ENCODE measurements at regions of chr7 and their contacts with region 1.

Region 1: GRCh38 chr7:141014524-141015395 is at the start of gene MRPS33:
- DNase-seq: peak; percentile 96 to 97
- H3K4me3 ChIP-seq: peak within 1 kb of the TSS; percentile 62
- H3K4me3 Mint-ChIP-seq: peak within 1 kb of the TSS; percentile 91
- H3K27ac Mint-ChIP-seq: peak within 1 kb of the TSS; percentile 95
- H3K4me1 ChIP-seq: no peaks in the 10 kb centered on the region
- H3K4me1 Mint-ChIP-seq: peaks cover 11% of the 10 kb centered on the region
- H3K27me3 ChIP-seq: no peaks in the 10 kb centered on the region
- H3K27me3 Mint-ChIP-seq: peaks cover 2% of the 10 kb centered on the region
- CTCF ChIP-seq: peak in 1 of 2 experiments; percentile 80
- total RNA-seq, gene MRPS33: 67.7 and 70.2 TPM in 2 replicates

Region 2: DNA sequence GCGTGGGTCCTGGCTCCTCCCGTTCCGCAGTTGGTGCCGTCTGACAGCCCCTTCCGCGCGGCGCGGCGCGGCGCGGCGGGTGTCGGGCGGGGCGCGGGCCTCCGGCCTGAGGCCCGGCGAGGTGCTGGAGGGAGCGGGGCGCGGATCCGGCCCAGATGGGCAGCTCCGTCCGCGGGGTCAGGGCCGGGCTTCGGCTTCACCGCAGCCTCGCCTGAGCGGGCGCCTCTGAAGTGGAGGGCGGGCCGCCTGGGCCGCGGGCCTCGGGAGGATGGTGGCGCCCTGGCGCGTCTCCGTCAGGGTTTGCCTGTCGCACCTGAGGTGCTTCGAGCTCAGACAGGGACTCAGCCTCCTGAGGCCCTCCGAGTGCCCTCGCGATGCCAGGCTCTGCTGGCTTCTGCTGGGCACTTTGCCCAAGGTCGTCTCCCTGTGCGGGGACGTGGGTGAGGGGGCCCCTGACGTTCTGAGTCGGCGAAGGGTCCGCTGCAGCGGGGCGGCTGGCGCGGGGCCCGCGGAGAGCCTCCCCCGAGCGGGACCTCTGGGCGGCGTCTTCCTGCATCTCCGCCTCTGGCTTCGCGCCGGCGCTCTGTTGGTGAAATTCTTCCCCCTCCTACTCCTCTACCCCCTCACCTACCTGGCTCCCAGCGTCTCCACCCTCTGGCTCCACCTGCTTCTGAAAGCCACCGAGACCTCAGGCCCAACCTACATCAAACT is 341.5 kb before region 1 on chr7:
- CTCF ChIA-PET with region 1: no interaction called
- POLR2A ChIA-PET with region 1: no interaction called
- intact Hi-C with region 1: loop called (anchors 5 kb)
- DNase-seq: peak; percentile 68 to 72
- H3K4me3 ChIP-seq: peak overlapping the region; percentile 86
- H3K4me3 Mint-ChIP-seq: peak overlapping the region; percentile 81
- H3K27ac Mint-ChIP-seq: peak overlapping the region; percentile 31
- H3K4me1 ChIP-seq: 0 out of 2 replicates have a peak, but pooled peaks cover 3% of the 10 kb centered on the region
- H3K4me1 Mint-ChIP-seq: peaks cover 6% of the 10 kb centered on the region
- H3K27me3 ChIP-seq: no peaks in the 10 kb centered on the region
- H3K27me3 Mint-ChIP-seq: no peaks in the 10 kb centered on the region
- CTCF ChIP-seq: no peak

Region 3: GRCh38 chr7:140810830-140811556 is 203.8 kb before region 1 on chr7:
- CTCF ChIA-PET with region 1: interaction called, 43 read pairs
- POLR2A ChIA-PET with region 1: interaction called, 5 read pairs
- intact Hi-C with region 1: loop called (anchors 1 kb)
- DNase-seq: peak; percentile 73 to 81
- H3K4me3 ChIP-seq: no peak overlapping the region
- H3K4me3 Mint-ChIP-seq: no peak overlapping the region
- H3K27ac Mint-ChIP-seq: no peak overlapping the region
- H3K4me1 ChIP-seq: no peaks in the 10 kb centered on the region
- H3K4me1 Mint-ChIP-seq: peaks cover 6% of the 10 kb centered on the region
- H3K27me3 ChIP-seq: no peaks in the 10 kb centered on the region
- H3K27me3 Mint-ChIP-seq: no peaks in the 10 kb centered on the region
- CTCF ChIP-seq: peak; percentile 63 to 75

Region 4: DNA sequence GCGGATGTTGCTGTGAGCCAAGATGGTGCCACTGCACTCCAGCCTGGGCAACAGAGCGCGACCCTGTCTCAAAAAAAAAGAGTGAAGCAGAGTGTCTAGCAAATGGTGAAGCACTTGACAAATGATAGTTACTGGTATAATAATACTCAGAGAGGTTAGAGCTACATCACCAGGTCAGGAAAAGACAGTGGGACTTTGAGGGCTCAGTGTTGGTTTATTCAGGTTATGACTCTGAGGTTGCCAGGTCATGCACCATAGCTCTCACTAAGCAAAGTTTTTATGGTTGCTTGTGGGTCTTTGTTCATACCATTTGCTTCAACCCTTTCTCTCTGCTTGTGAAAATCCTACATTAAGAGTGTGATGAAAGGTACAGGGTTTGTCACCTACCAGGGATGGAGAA is 13.6 kb before region 1 on chr7:
- CTCF ChIA-PET with region 1: interaction called, 6 read pairs
- POLR2A ChIA-PET with region 1: interaction called, 8 read pairs
- intact Hi-C with region 1: loop called (anchors 1 kb)
- DNase-seq: peak in 1 of 2 experiments; percentile 8
- H3K4me3 ChIP-seq: no peak overlapping the region
- H3K4me3 Mint-ChIP-seq: peak overlapping the region; percentile 52
- H3K27ac Mint-ChIP-seq: peak overlapping the region; percentile 6
- H3K4me1 ChIP-seq: peaks cover 38% of the 10 kb centered on the region
- H3K4me1 Mint-ChIP-seq: peaks cover 30% of the 10 kb centered on the region
- H3K27me3 ChIP-seq: no peaks in the 10 kb centered on the region
- H3K27me3 Mint-ChIP-seq: no peaks in the 10 kb centered on the region
- CTCF ChIP-seq: no peak

Region 5: GRCh38 chr7:141533149-141533949 is 518.6 kb after region 1 on chr7:
- CTCF ChIA-PET with region 1: no interaction called
- POLR2A ChIA-PET with region 1: no interaction called
- intact Hi-C with region 1: loop called (anchors 1 kb)
- DNase-seq: peak; percentile 46 to 70
- H3K4me3 ChIP-seq: no peak overlapping the region
- H3K4me3 Mint-ChIP-seq: no peak overlapping the region
- H3K27ac Mint-ChIP-seq: no peak overlapping the region
- H3K4me1 ChIP-seq: no peaks in the 10 kb centered on the region
- H3K4me1 Mint-ChIP-seq: no peaks in the 10 kb centered on the region
- H3K27me3 ChIP-seq: peaks cover 3% of the 10 kb centered on the region
- H3K27me3 Mint-ChIP-seq: peaks cover 13% of the 10 kb centered on the region
- CTCF ChIP-seq: peak; percentile 91 to 96